ENCODE measurements at regions of chr10 and their contacts with region 1.

Region 1: DNA sequence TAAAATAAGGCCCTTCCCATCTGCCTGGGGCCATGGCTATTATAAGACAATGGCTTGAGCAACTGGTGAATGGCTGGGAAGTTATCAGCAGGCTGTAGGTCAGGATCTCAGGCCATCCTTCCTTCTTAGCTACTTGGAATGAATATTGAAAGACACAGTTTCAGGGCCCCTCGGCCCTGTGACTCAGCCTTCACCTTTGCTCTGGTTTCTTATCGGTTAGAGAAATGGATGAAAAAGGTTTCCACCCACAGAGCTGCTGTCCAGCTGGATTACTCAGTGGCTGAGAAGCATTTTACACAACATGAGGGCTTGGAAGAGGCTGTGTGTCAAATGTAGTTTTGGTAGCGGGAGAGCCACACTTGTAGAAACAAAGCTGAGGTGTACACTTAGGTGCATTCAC is 9.4 kb downstream of the ACSL5 start:
- DNase-seq: peak; percentile 86 to 91
- H3K4me3 ChIP-seq: no peak overlapping the region
- H3K4me3 Mint-ChIP-seq: peak overlapping the region; percentile 63
- H3K27ac Mint-ChIP-seq: peak overlapping the region; percentile 90
- H3K4me1 ChIP-seq: peaks cover 88% of the 10 kb centered on the region
- H3K4me1 Mint-ChIP-seq: peaks cover 53% of the 10 kb centered on the region
- H3K27me3 ChIP-seq: no peaks in the 10 kb centered on the region
- H3K27me3 Mint-ChIP-seq: no peaks in the 10 kb centered on the region
- CTCF ChIP-seq: no peak

Region 2: GRCh38 chr10:112202561-112203241 is 180.6 kb before region 1 on chr10:
- CTCF ChIA-PET with region 1: no interaction called
- POLR2A ChIA-PET with region 1: no interaction called
- intact Hi-C with region 1: no loop called
- DNase-seq: no peak
- H3K4me3 ChIP-seq: no peak overlapping the region
- H3K4me3 Mint-ChIP-seq: no peak overlapping the region
- H3K27ac Mint-ChIP-seq: no peak overlapping the region
- H3K4me1 ChIP-seq: no peaks in the 10 kb centered on the region
- H3K4me1 Mint-ChIP-seq: no peaks in the 10 kb centered on the region
- H3K27me3 ChIP-seq: no peaks in the 10 kb centered on the region
- H3K27me3 Mint-ChIP-seq: no peaks in the 10 kb centered on the region
- CTCF ChIP-seq: no peak

Region 3: DNA sequence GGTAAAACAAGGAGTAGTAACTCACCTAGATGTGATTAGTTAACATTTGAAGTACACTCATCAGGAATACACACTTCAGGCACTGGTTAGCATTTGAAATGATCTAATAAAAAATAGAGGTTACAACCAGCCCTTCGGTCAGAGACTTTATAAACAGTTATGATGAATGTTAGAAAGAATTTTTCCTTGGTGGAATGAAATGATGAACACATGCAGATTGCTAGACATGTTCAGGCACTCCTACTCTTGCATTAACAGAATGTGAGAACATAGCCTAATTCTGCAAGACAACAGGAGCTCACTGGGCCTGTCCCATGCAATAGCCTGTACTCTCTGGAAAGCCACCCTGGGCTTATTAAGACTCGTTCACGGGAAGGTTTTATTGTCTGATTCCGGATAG is 147.4 kb before region 1 on chr10:
- CTCF ChIA-PET with region 1: no interaction called
- POLR2A ChIA-PET with region 1: no interaction called
- intact Hi-C with region 1: no loop called
- DNase-seq: no peak
- H3K4me3 ChIP-seq: no peak overlapping the region
- H3K4me3 Mint-ChIP-seq: no peak overlapping the region
- H3K27ac Mint-ChIP-seq: no peak overlapping the region
- H3K4me1 ChIP-seq: peaks cover 10% of the 10 kb centered on the region
- H3K4me1 Mint-ChIP-seq: peaks cover 17% of the 10 kb centered on the region
- H3K27me3 ChIP-seq: no peaks in the 10 kb centered on the region
- H3K27me3 Mint-ChIP-seq: no peaks in the 10 kb centered on the region
- CTCF ChIP-seq: no peak

Region 4: DNA sequence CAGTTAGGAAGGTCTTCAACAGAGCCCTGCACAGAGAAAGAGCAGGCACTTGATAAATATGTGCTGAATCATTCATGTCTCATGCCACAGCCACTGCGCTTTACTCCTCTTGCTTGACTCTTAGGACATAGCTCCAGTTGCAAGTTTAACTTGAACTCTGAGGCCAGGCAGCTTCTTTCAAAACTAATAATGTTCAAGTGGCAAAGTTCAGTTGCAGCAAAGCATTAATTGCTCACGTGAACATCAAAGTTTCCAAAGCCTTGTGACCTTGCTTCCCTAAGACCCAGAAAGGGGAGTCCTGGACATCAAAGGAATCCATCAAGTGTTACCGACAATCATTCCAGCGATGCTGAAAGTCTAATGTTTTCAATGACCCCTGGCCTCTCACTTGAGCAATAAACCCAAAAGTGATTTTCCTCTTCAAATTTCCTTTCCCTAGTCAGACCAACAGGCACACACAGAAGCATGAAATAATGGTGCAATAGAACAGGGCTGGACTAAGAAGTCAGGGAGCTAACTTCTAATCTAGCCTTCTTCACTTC is 122.0 kb before region 1 on chr10:
- CTCF ChIA-PET with region 1: no interaction called
- POLR2A ChIA-PET with region 1: no interaction called
- intact Hi-C with region 1: loop called (anchors 2 kb)
- DNase-seq: peak; percentile 75 to 81
- H3K4me3 ChIP-seq: no peak overlapping the region
- H3K4me3 Mint-ChIP-seq: peak overlapping the region; percentile 2
- H3K27ac Mint-ChIP-seq: peak overlapping the region; percentile 75
- H3K4me1 ChIP-seq: peaks cover 31% of the 10 kb centered on the region
- H3K4me1 Mint-ChIP-seq: peaks cover 25% of the 10 kb centered on the region
- H3K27me3 ChIP-seq: no peaks in the 10 kb centered on the region
- H3K27me3 Mint-ChIP-seq: no peaks in the 10 kb centered on the region
- CTCF ChIP-seq: no peak

Region 5: DNA sequence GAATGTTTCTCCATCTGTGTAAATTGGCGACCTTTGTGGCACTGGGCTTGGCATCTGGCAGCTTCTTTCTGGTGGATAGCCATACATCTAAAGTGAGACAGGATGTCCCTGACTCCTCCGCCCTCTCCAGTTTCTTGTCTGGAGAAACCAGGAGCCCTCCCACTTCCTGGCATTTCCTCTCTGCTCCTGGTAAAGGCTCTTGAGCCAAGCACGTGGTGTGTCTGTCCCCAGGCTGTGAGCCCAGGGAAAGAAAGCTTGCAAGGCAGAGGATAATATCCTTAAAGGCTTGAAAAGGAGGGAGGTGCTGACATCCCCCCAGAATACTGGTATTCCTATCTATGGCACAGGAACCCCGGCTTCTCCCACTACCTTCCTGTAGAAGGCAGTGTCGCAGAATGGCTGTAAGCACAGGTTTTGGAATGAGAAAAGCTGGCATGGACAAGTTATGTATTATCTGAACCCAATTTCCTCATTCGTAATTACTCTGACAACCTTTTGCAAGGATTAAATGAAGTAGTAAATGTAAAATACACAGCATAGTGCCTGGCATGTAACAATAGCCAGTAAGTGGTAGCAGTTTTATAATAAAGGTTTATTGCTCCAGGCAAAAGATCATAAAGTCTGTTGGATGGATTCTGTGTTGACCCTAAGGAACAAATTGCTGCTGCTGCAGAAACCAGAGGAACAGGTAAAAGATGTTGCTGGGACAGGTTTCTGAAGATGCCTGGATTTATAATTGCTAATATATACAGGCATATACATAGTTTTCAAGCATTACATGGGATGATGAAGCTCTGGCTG is 21.2 kb before region 1 on chr10:
- CTCF ChIA-PET with region 1: no interaction called
- POLR2A ChIA-PET with region 1: no interaction called
- intact Hi-C with region 1: loop called (anchors 1 kb)
- DNase-seq: peak in 1 of 2 experiments; percentile 23
- H3K4me3 ChIP-seq: no peak overlapping the region
- H3K4me3 Mint-ChIP-seq: no peak overlapping the region
- H3K27ac Mint-ChIP-seq: no peak overlapping the region
- H3K4me1 ChIP-seq: peaks cover 63% of the 10 kb centered on the region
- H3K4me1 Mint-ChIP-seq: peaks cover 31% of the 10 kb centered on the region
- H3K27me3 ChIP-seq: no peaks in the 10 kb centered on the region
- H3K27me3 Mint-ChIP-seq: no peaks in the 10 kb centered on the region
- CTCF ChIP-seq: peak in 1 of 2 experiments; percentile 23

Region 6: GRCh38 chr10:112394475-112394875 is 11.2 kb after region 1 on chr10:
- CTCF ChIA-PET with region 1: interaction called, 3 read pairs
- POLR2A ChIA-PET with region 1: no interaction called
- intact Hi-C with region 1: loop called (anchors 1 kb)
- DNase-seq: peak; percentile 70 to 82
- H3K4me3 ChIP-seq: no peak overlapping the region
- H3K4me3 Mint-ChIP-seq: no peak overlapping the region
- H3K27ac Mint-ChIP-seq: no peak overlapping the region
- H3K4me1 ChIP-seq: peaks cover 63% of the 10 kb centered on the region
- H3K4me1 Mint-ChIP-seq: peaks cover 23% of the 10 kb centered on the region
- H3K27me3 ChIP-seq: no peaks in the 10 kb centered on the region
- H3K27me3 Mint-ChIP-seq: no peaks in the 10 kb centered on the region
- CTCF ChIP-seq: no peak

Region 7: DNA sequence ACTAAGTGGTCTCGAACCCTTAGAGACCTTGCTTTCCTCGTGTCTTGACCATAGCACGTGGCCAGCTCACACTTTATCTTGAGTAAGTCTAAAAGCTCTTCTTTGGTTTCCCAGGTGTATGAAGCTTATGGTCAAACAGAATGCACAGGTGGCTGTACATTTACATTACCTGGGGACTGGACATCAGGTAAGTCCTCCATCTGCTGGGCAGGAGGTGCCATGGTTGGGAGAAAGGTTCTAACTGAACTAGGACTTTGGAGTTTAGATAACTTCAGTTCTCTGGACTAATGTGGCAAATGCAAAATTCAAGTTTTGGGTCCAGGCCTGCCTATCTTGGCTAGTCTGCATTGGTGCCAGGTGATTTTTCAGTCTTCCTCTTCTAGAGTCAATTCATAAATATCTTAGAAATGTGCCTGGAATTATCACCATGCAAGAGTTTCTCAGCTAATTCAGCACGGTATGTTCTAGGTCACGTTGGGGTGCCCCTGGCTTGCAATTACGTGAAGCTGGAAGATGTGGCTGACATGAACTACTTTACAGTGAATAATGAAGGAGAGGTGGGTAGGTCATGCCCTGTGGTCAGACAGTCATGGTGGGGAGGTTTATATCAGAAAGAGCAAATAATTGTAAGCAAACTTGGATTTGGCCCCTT is 38.3 kb after region 1 on chr10:
- CTCF ChIA-PET with region 1: interaction called, 3 read pairs
- POLR2A ChIA-PET with region 1: interaction called, 3 read pairs
- intact Hi-C with region 1: loop called (anchors 2 kb)
- DNase-seq: no peak
- H3K4me3 ChIP-seq: no peak overlapping the region
- H3K4me3 Mint-ChIP-seq: no peak overlapping the region
- H3K27ac Mint-ChIP-seq: no peak overlapping the region
- H3K4me1 ChIP-seq: no peaks in the 10 kb centered on the region
- H3K4me1 Mint-ChIP-seq: no peaks in the 10 kb centered on the region
- H3K27me3 ChIP-seq: no peaks in the 10 kb centered on the region
- H3K27me3 Mint-ChIP-seq: no peaks in the 10 kb centered on the region
- CTCF ChIP-seq: peak in 1 of 2 experiments; percentile 27